ENCODE measurements at regions of chr2 and their contacts with region 1.

Region 1: DNA sequence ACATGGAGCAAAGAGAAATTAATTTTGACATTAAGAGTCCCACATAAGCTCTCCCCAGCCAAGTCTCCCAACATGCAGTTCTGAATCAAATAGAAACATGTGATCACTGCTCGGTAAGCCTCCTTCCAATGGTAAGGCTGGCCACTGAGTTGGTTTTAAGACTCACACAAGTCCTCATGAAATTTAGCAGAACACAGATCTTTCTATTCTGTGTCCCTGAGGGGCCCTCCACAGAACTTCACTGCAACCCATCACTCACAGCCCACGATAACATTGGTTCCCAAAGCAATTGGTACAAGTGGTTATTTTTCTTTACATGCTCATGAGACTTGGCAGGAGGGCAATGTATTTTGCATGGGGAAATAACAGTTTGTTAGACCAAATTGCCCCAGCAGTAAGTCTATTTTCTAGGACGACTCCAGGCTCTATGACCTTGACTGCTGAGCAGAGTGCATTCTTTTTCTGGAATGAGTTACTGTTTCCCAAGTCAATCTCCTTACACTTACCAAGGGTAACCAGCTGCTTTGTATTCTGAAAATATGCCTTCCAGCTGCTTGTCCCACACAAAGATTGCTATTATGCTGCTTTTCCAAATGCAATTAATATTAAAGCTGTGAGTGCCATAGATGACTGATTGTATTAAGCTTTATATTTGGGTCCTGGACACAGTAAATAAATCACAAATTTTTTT is 142.3 kb upstream of the TANK start:
- DNase-seq: no peak
- ATAC-seq: no peak
- H3K4me3 Mint-ChIP-seq: no peak overlapping the region
- H3K27ac Mint-ChIP-seq: no peak overlapping the region
- H3K4me1 Mint-ChIP-seq: no peaks in the 10 kb centered on the region
- H3K27me3 Mint-ChIP-seq: peaks cover 3% of the 10 kb centered on the region

Region 2: GRCh38 chr2:159605441-159606178 is 1412.3 kb before region 1 on chr2:
- CTCF ChIA-PET with region 1: no interaction called
- POLR2A ChIA-PET with region 1: interaction called, 11 read pairs
- intact Hi-C with region 1: no loop called
- DNase-seq: no peak
- ATAC-seq: no peak
- H3K4me3 Mint-ChIP-seq: no peak overlapping the region
- H3K27ac Mint-ChIP-seq: no peak overlapping the region
- H3K4me1 Mint-ChIP-seq: peaks cover 8% of the 10 kb centered on the region
- H3K27me3 Mint-ChIP-seq: no peaks in the 10 kb centered on the region

Region 3: DNA sequence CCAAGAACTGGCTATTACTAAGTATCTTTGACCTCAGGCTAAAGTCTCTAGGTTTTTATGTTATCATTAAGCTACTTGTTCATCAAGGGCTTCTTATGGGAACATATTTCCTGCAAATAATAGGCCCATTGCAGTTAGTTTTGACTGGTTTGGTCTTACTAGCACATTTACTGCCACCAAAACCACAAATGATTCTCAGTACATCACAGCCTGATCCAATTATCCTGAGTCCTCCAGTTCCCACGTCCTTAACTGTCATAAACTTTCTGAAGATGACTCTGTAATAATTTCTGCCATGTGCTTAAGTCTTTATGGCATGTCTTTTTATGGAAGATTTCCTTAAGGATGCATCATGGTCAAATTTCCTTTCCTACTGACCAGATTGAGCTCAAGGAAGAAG is 19.0 kb after region 1 on chr2:
- CTCF ChIA-PET with region 1: interaction called, 5 read pairs
- POLR2A ChIA-PET with region 1: no interaction called
- intact Hi-C with region 1: loop called in 1 of 2 experiments (anchors 2 kb)
- DNase-seq: no peak
- ATAC-seq: no peak
- H3K4me3 Mint-ChIP-seq: no peak overlapping the region
- H3K27ac Mint-ChIP-seq: no peak overlapping the region
- H3K4me1 Mint-ChIP-seq: no peaks in the 10 kb centered on the region
- H3K27me3 Mint-ChIP-seq: peaks cover 5% of the 10 kb centered on the region